ENCODE measurements at regions of chr6 and their contacts with region 1.

Region 1: DNA sequence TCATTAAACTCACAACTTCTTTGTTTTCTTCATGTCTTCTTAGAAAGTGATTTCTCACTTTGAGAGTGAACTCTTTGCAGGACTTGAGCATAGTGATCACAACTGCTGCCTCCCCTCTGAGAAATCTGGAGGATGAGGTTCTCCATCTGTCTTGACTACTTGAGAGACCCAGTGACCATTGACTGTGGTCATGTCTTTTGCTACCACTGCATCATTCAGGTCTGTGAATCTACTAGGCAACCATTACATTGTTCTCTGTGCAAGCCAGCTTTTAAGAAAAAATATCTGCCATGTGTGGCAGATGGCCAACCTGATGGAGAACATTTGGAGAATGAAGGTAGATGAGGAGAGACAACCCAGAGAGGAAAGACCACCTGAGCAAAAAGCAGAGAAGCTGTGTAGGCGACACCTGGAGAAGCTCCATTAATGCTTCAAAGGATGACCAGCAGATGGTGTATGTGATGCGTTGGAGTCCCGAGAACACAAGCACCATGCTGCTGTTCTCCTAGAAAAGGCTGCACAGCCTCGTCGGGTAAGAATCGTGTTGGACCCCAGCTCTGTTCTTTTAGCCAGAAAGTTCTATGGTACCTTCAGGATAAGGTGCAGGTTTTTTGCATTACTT is 25.1 kb upstream of the TRIM26 start:
- DNase-seq: no peak
- H3K4me3 ChIP-seq: no peak overlapping the region
- H3K27ac ChIP-seq: no peak overlapping the region
- H3K4me1 ChIP-seq: no peaks in the 10 kb centered on the region
- H3K27me3 ChIP-seq: peaks cover 6% of the 10 kb centered on the region
- CTCF ChIP-seq: peak; percentile 9 to 26 (median 18)
- EP300 ChIP-seq: no peak
- POLR2A ChIP-seq: no peak

Region 2: GRCh38 chr6:30396833-30397479 is 158.7 kb after region 1 on chr6:
- in situ Hi-C with region 1: loop called (anchors 25 kb)
- intact Hi-C with region 1: no loop called
- DNase-seq: peak; percentile 83
- H3K4me3 ChIP-seq: no peak overlapping the region
- H3K27ac ChIP-seq: no peak overlapping the region
- H3K4me1 ChIP-seq: no peaks in the 10 kb centered on the region
- H3K27me3 ChIP-seq: peaks cover 23% of the 10 kb centered on the region
- CTCF ChIP-seq: peak; percentile 77 to 89 (median 83)
- EP300 ChIP-seq: no peak
- POLR2A ChIP-seq: no peak

Region 3: DNA sequence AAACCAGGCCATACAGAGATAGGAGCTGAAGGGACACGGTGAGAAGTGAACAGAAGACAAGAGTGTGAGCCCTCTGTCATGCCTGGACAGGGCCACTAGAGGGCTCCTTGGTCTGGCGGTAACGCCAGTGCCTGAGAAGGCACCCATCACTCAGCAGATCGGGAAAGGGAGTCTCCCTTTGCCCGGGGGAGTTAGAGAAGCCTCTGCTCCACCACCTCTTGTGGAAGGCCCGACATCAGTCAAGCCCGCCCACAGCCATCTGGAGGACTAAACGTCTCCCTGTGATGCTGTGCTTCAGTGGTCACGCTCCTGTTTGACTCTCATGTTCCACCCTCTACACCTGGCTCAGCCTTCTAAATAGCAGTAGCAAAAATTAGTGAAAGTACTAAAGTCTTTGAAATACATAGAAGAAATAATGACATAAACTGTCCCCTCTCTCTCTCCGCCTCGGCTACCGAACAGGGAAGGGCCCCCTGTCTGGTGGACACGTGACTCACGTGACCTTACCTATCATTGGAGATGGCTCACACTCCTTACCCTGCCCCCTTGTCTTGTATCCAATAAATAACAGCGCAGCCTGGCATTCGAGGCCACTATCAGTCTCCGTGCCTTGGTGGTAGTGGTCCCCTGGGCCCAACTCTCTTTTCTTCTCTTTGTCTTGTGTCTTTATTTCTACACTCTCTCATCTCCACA is 173.4 kb after region 1 on chr6:
- in situ Hi-C with region 1: loop called in 1 of 4 experiments (anchors 25 kb)
- intact Hi-C with region 1: no loop called
- DNase-seq: peak; percentile 65
- H3K4me3 ChIP-seq: no peak overlapping the region
- H3K27ac ChIP-seq: no peak overlapping the region
- H3K4me1 ChIP-seq: no peaks in the 10 kb centered on the region
- H3K27me3 ChIP-seq: peaks cover 64% of the 10 kb centered on the region
- CTCF ChIP-seq: peak; percentile 56 to 91 (median 81)
- EP300 ChIP-seq: no peak
- POLR2A ChIP-seq: no peak

Region 4: GRCh38 chr6:30556066-30556905 is 318.0 kb after region 1 on chr6 and contains the start of gene GNL1:
- in situ Hi-C with region 1: no loop called
- intact Hi-C with region 1: no loop called
- DNase-seq: peak; percentile 99
- H3K4me3 ChIP-seq: peak within 1 kb of the TSS; percentile 74 to 91 (median 84)
- H3K27ac ChIP-seq: peak within 1 kb of the TSS; percentile 96 to 99 (median 98)
- H3K4me1 ChIP-seq: peaks cover 9 to 22% (median 18%) of the 10 kb centered on the region in 4 donors
- H3K27me3 ChIP-seq: no peaks in the 10 kb centered on the region
- CTCF ChIP-seq: peak in 2 of 5 experiments; percentile 30 to 41
- EP300 ChIP-seq: no peak
- POLR2A ChIP-seq: peak; percentile 63
- total RNA-seq, gene GNL1: 13.5 to 34.1 (median 20.7) TPM

Measured in transverse colon (tissue), 4 donors.